Left colon (tissue), 2 donors: ENCODE measurements at regions of chr12 and their contacts with region 1.

Region 1: GRCh38 chr12:2862876-2863275 is 6.0 kb upstream of the TEX52 start:
- DNase-seq: no peak
- ATAC-seq: no peak

Region 2: DNA sequence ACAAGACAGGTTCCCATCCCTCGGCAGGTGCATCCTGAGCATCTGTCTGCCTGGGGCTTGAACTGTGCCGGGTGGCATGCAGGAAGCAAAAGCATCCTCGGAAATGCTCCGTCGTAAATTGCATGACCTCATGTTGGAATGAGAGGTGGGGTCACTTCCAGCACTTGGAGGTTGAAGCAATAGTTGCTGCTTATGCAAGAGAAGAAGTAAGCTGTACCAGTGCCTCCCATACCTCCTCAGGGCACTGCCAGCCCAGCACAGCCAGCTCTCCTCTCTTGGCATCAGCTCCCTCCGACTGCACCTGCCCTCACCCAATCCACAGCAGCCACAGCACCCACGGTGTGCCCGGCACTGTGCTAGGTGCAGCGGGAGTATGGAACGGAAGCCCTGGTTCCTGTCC is 107.9 kb after region 1 on chr12:
- intact Hi-C with region 1: no loop called
- DNase-seq: no peak
- ATAC-seq: no peak

Region 3: DNA sequence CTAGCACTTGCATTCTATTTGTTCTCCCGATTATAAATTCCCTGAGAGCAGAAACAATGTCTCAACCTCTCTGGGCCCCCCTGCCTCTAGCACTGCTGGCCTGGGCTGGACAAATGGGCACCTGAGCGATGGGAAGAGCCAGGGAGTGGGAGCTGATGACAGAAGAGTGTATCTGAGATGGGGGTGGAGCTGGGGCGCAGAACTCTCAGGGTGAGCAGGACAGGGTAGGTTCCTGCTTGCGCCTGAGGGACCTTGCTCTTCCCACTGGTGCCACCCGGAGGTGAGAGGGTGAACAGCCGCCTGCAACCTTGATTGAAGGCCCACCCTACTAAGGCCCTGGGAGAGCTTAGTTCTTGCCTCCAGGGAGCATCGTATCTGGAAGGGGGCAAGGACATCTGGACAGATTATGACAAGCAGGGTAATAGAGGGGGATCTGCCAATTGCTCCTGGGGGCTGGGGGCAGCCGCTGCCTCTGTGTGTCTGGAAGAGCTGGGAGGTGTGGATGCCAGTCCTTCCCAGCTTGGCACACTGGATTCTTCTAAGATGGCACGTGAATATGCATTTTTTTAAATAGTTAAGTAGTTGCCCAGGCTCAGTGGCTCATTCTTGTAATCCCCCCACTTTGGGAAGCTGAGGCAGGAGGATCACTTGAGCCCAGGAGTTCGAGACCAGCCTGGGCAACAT is 171.3 kb after region 1 on chr12:
- intact Hi-C with region 1: loop called in 1 of 2 experiments (anchors 10 kb)
- DNase-seq: peak; percentile 46 to 64
- ATAC-seq: peak; percentile 92